ENCODE measurements at regions of chr15 and their contacts with region 1.

Region 1: GRCh38 chr15:62190274-62190673 is 25.2 kb upstream of the C2CD4B start:
- DNase-seq: no peak
- H3K4me3 ChIP-seq: no peak overlapping the region
- H3K27ac ChIP-seq: no peak overlapping the region
- H3K4me1 ChIP-seq: no peaks in the 10 kb centered on the region
- H3K27me3 ChIP-seq: no peaks in the 10 kb centered on the region
- CTCF ChIP-seq: no peak
- EP300 ChIP-seq: no peak
- POLR2A ChIP-seq: no peak

Region 2: GRCh38 chr15:60223176-60223575 is 1967.1 kb before region 1 on chr15:
- intact Hi-C with region 1: loop called in 1 of 4 experiments (anchors 10 kb)
- DNase-seq: no peak
- H3K4me3 ChIP-seq: no peak overlapping the region
- H3K27ac ChIP-seq: no peak overlapping the region
- H3K4me1 ChIP-seq: no peaks in the 10 kb centered on the region
- H3K27me3 ChIP-seq: no peaks in the 10 kb centered on the region
- CTCF ChIP-seq: no peak
- EP300 ChIP-seq: no peak
- POLR2A ChIP-seq: no peak

Region 3: GRCh38 chr15:61861962-61862361 is 328.3 kb before region 1 on chr15:
- intact Hi-C with region 1: no loop called
- DNase-seq: no peak
- H3K4me3 ChIP-seq: no peak overlapping the region
- H3K27ac ChIP-seq: no peak overlapping the region
- H3K4me1 ChIP-seq: no peaks in the 10 kb centered on the region
- H3K27me3 ChIP-seq: no peaks in the 10 kb centered on the region
- CTCF ChIP-seq: no peak
- EP300 ChIP-seq: no peak
- POLR2A ChIP-seq: no peak

Region 4: DNA sequence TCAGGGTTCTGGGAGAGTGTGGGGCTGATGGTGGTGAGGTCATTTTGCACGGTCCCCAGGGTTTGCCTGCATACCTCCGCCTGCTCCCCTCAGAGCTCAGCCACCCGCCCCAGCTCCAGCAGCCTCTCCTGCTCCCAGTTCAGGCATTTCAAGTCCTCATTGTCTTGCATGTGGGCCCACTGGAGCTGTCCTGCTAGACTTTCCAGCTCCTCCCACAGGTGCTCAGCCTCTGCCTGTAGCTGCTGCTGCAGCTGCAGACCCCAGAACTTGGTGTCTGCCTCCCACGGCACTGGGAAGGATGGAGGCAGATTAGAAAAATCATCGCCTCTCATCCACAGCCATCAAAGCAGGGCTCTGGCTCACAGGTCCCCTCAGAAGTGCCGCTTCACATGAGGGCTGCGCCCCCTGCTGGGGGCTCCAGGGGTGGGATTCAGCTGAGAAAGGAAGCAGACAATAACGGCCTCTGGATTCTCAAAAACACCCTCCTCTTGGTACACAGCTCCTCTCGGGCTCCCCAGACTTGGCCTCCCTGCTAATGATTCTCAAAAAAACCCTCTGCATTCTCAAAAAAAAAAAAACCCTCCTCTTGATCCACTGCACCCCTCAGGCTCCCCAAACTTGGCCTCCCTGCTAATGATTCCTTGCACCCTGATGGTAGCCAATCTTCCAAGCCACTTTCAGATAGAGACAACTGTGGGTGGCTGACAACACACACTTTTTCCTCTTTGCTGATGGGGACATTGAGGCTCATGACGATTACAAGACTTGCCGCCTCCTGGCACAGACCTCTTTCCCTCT is 64.1 kb after region 1 on chr15:
- intact Hi-C with region 1: no loop called
- DNase-seq: peak in 4 of 5 donors; percentile 28 to 48 (median 30)
- H3K4me3 ChIP-seq: no peak overlapping the region
- H3K27ac ChIP-seq: no peak overlapping the region
- H3K4me1 ChIP-seq: no peaks in the 10 kb centered on the region
- H3K27me3 ChIP-seq: no peaks in the 10 kb centered on the region
- CTCF ChIP-seq: no peak
- EP300 ChIP-seq: no peak
- POLR2A ChIP-seq: no peak

Region 5: DNA sequence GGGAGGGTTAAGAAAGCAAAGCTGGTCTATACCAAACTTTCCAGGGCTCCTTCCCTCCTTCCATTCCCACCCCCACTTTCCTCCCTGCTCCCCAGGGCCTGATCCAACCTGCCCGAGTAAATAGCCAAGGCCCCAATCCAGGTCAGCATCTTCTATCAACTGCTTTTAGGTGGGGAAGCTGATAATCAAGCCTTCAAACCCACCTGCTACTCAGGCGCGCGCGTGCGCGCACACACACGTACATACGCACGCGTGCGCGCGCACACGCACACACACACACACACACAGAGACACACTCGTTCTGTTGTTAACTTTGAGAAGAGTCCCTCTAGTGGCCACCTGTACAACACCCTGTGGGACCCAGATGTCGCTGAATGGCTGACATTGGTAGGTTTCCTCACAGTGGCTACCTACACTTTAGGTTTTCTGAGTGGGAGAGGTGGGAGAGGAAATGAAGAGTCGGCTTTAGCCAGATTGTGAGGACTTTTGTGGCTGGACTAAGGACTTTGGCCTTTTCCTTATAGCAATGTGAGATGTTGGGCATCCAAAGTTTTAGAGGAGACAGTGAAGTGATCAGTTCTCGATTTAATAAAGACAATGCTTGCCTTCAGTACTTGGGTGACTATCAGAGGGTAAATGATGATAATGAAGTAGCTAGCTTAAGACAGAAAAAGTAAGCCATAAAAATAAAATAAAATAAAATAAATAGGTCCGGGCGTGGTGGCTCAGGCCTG is 154.7 kb after region 1 on chr15:
- intact Hi-C with region 1: no loop called
- DNase-seq: peak in 3 of 5 donors; percentile 26 to 50 (median 36)
- H3K4me3 ChIP-seq: no peak overlapping the region
- H3K27ac ChIP-seq: no peak overlapping the region
- H3K4me1 ChIP-seq: no peaks in the 10 kb centered on the region
- H3K27me3 ChIP-seq: no peaks in the 10 kb centered on the region
- CTCF ChIP-seq: peak in 1 of 3 donors; percentile 9
- EP300 ChIP-seq: no peak
- POLR2A ChIP-seq: no peak